ENCODE measurements at regions of chr19 and their contacts with region 1.

Region 1: GRCh38 chr19:39970675-39971379 is at the start of gene PSMC4:
- DNase-seq: peak; percentile 97 to 100 (median 98)
- ATAC-seq: peak; percentile 98
- H3K4me3 ChIP-seq: peak within 1 kb of the TSS; percentile 85 to 87
- H3K4me3 Mint-ChIP-seq: peak within 1 kb of the TSS; percentile 99
- H3K27ac ChIP-seq: peak within 1 kb of the TSS; percentile 94 to 96
- H3K27ac Mint-ChIP-seq: peak within 1 kb of the TSS; percentile 99
- H3K4me1 ChIP-seq: peaks cover 31% of the 10 kb centered on the region
- H3K4me1 Mint-ChIP-seq: peaks cover 51% of the 10 kb centered on the region
- H3K27me3 ChIP-seq: no peaks in the 10 kb centered on the region
- H3K27me3 Mint-ChIP-seq: no peaks in the 10 kb centered on the region
- CTCF ChIP-seq: peak; percentile 82
- total RNA-seq, gene PSMC4: 75.9 to 79.0 TPM

Region 2: GRCh38 chr19:39824143-39825092 is 146.4 kb before region 1 on chr19:
- CTCF ChIA-PET with region 1: no interaction called
- POLR2A ChIA-PET with region 1: no interaction called
- intact Hi-C with region 1: loop called (anchors 2 kb)
- DNase-seq: peak; percentile 72 to 94 (median 87)
- ATAC-seq: peak; percentile 98
- H3K4me3 ChIP-seq: peak overlapping the region; percentile 72 to 79
- H3K4me3 Mint-ChIP-seq: no peak overlapping the region
- H3K27ac ChIP-seq: peak overlapping the region; percentile 43 to 45
- H3K27ac Mint-ChIP-seq: no peak overlapping the region
- H3K4me1 ChIP-seq: peaks cover 27% of the 10 kb centered on the region
- H3K4me1 Mint-ChIP-seq: peaks cover 17% of the 10 kb centered on the region
- H3K27me3 ChIP-seq: no peaks in the 10 kb centered on the region
- H3K27me3 Mint-ChIP-seq: no peaks in the 10 kb centered on the region
- CTCF ChIP-seq: no peak

Region 3: DNA sequence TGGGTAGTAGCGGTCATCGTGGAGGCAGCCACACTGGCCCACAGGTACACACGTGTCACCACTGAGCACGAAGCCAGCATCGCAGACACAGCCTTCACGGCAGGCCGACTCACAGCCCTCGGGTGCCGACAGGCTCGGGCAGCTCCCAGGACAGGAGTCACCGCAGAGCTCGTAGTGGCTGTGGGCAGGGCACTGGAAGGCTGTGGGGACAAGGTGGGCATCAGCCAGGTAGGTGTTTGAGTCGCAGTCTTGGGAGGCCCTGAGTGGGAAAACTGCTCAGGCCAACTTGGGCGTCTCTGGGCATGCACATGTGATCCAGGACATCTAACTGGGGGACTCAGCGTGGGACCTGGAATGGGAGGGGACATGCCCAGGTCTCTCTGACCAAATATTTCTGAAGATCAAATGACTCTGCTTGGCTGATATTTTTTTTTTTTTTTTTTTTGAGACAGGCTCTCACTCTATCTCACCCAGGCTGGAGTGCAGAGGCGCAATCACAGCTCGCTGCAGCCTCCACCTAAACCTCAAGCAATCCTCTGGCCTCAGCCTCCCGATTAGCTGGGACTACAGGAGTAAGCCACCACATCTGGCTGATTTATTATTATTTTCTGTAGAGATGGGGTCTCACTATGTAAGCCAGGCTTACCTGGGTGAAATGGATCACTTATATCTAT is 80.8 kb before region 1 on chr19:
- CTCF ChIA-PET with region 1: interaction called, 7 read pairs
- POLR2A ChIA-PET with region 1: interaction called, 4 read pairs
- intact Hi-C with region 1: loop called (anchors 5 kb)
- DNase-seq: peak in 1 of 9 experiments; percentile 12
- ATAC-seq: no peak
- H3K4me3 ChIP-seq: no peak overlapping the region
- H3K4me3 Mint-ChIP-seq: no peak overlapping the region
- H3K27ac ChIP-seq: no peak overlapping the region
- H3K27ac Mint-ChIP-seq: no peak overlapping the region
- H3K4me1 ChIP-seq: no peaks in the 10 kb centered on the region
- H3K4me1 Mint-ChIP-seq: peaks cover 11% of the 10 kb centered on the region
- H3K27me3 ChIP-seq: no peaks in the 10 kb centered on the region
- H3K27me3 Mint-ChIP-seq: no peaks in the 10 kb centered on the region
- CTCF ChIP-seq: no peak

Region 4: DNA sequence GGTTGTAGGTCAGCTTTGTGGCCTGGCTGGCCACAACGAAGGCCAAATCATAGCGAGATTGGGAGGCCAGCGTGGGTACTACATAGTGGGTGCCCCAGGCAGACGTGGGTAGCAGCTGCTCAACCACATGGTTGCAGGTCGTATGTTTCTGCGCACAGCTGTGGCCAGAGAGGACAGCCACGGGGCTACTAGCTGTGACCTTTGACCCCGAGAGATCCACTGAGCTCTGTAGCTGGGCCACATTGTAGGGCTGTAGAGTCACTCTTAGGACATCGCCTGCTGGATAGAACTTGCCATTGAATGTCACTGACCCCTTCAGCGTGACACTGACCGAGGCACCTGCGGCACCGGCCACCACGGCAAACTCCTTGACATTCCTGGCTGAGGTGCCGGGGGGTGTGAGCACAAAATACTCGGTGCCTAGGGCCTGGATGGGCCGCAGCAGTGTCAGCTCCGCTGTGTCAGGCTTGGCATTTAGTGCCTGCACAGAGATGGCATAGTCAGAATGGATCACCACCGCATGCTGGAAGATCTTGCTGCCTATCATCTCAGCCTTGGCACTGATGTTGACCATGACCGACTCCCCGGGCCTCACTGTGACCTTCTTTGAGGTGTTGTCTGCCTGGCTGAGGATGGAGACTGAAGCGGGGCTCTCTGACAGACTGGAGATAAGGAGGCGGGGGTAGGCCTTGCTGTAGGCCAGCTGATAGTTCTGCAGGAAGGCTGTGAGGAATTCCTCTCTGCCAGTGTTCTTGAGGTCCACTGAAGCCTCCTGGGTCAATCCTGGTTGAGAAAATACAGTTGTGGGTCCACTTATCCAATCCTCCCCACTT is 43.1 kb before region 1 on chr19:
- CTCF ChIA-PET with region 1: interaction called, 11 read pairs
- POLR2A ChIA-PET with region 1: interaction called, 6 read pairs
- intact Hi-C with region 1: no loop called
- DNase-seq: peak in 1 of 9 experiments; percentile 34
- ATAC-seq: no peak
- H3K4me3 ChIP-seq: no peak overlapping the region
- H3K4me3 Mint-ChIP-seq: no peak overlapping the region
- H3K27ac ChIP-seq: no peak overlapping the region
- H3K27ac Mint-ChIP-seq: no peak overlapping the region
- H3K4me1 ChIP-seq: peaks cover 10% of the 10 kb centered on the region
- H3K4me1 Mint-ChIP-seq: peaks cover 36% of the 10 kb centered on the region
- H3K27me3 ChIP-seq: no peaks in the 10 kb centered on the region
- H3K27me3 Mint-ChIP-seq: no peaks in the 10 kb centered on the region
- CTCF ChIP-seq: no peak

Region 5: DNA sequence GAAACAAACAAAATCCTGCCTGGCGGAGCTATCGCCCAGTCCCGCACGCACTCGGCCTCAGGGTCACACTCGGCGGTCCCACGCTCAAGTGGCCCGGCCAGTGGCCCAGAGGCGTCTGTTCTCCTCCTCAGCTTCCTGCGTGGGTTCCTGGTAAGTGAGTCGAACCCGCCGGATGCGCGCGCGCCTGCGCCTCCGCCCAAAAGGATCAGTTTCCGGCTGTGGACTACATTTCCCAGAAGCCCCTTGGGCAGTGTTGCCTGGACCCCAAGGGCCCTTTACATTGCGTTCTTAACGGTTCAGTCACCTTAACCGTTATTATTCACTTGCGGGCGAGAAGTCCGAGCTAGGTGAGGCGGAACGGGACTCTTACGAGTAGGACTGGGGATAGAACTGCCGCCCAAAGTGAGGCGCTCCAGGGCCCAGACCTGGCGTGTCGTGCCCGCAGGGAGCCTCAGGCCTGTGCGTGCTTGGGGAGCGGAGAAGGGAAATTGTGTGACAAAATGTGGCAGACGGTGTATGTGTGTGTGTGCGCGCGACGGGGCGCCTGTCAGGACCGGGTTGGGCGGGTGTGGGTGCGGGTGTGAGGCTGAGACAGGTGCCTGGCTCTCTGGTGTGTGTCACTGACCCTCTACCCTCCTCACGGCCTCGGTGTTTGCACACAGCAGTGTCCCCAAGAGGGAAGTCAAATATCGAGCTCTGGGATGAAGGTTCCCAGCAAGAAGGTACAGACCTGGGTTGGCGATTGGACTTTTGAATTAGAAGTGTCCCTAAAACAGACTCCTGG is 26.2 kb after region 1 on chr19 and contains the start of gene ZNF546:
- CTCF ChIA-PET with region 1: interaction called, 9 read pairs
- POLR2A ChIA-PET with region 1: interaction called, 28 read pairs
- intact Hi-C with region 1: loop called (anchors 1 kb)
- DNase-seq: peak; percentile 70 to 94 (median 90)
- ATAC-seq: peak; percentile 88
- H3K4me3 ChIP-seq: peak within 1 kb of the TSS; percentile 80 to 85
- H3K4me3 Mint-ChIP-seq: peak within 1 kb of the TSS; percentile 90
- H3K27ac ChIP-seq: peak within 1 kb of the TSS; percentile 77 to 88
- H3K27ac Mint-ChIP-seq: peak within 1 kb of the TSS; percentile 92
- H3K4me1 ChIP-seq: peaks cover 15% of the 10 kb centered on the region
- H3K4me1 Mint-ChIP-seq: peaks cover 41% of the 10 kb centered on the region
- H3K27me3 ChIP-seq: no peaks in the 10 kb centered on the region
- H3K27me3 Mint-ChIP-seq: no peaks in the 10 kb centered on the region
- CTCF ChIP-seq: no peak
- total RNA-seq, gene ZNF546: 1.6 to 2.4 TPM

Measured in CD8-positive, alpha-beta T cell (primary cell).